ENCODE measurements at regions of chr1 and their contacts with region 1.

Region 1: DNA sequence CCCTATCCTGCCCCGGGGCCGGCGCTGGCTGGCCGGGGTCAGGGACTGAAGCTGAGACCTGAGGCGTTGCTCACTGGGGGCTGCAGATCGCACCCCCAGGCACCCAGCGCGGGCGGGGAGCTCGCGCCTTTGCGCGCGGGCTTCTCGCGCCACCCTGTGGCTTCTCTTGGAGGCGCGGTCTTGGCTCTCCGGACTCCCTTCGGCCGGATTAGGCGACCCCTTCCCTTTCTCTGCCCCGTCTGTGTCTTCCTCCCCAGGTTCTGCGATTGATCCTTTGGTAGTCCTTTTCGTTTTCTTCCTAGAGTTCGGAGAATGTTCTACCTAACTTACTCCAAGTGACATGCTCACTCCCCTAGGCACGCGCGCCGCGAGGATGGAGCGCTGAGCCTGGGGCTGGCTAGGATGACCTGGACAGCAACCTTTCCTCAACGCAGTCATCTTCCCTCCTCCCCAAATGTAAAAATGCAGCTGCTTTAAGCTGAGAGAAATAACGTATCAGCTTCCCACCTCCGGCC is 495 bp upstream of the NTRK1 start:
- DNase-seq: peak; percentile 53
- H3K4me3 Mint-ChIP-seq: peak overlapping the region; percentile 88
- H3K27ac Mint-ChIP-seq: peak overlapping the region; percentile 80
- H3K4me1 Mint-ChIP-seq: peaks cover 56% of the 10 kb centered on the region
- H3K27me3 Mint-ChIP-seq: peaks cover 15% of the 10 kb centered on the region

Region 2: DNA sequence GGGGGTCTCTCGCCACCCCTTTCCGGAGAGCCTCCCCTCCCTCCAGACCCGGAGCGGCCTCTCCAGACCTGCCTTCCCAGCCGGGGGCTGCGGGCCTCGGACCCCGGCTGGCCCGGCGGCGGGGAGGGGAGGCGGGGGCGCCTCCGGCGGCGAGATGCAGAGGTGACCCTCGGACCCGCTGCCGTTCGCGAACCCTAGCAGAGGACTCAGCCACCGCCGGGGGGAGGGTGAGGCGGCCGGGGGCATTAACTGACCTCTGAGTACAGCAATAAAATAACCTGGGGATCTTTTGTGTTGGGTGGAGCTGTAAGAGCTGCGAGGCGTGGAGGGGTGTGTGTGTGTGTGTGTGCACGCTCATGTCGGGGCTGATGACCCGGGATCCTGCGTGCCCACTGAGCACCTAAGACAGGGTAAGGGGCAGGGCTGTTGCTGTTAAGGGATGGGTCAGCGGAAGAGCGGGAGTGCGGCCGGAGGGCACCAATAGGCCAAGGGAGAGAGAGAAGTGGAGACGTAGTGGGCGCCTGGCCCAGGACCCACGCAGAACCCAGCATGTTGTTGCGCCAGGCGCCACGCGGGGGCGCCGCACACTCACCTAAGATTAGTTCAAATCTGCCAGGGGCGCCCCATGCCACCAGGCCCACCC is 234.6 kb before region 1 on chr1:
- intact Hi-C with region 1: no loop called
- DNase-seq: peak; percentile 38
- H3K4me3 Mint-ChIP-seq: peak overlapping the region; percentile 75
- H3K27ac Mint-ChIP-seq: peak overlapping the region; percentile 33
- H3K4me1 Mint-ChIP-seq: peaks cover 8% of the 10 kb centered on the region
- H3K27me3 Mint-ChIP-seq: peaks cover 74% of the 10 kb centered on the region

Region 3: GRCh38 chr1:156797212-156797871 is 62.8 kb before region 1 on chr1:
- intact Hi-C with region 1: loop called (anchors 1 kb)
- DNase-seq: peak; percentile 43
- H3K4me3 Mint-ChIP-seq: no peak overlapping the region
- H3K27ac Mint-ChIP-seq: no peak overlapping the region
- H3K4me1 Mint-ChIP-seq: peaks cover 27% of the 10 kb centered on the region
- H3K27me3 Mint-ChIP-seq: no peaks in the 10 kb centered on the region

Region 4: GRCh38 chr1:156838981-156839410 is 21.2 kb before region 1 on chr1:
- intact Hi-C with region 1: loop called (anchors 1 kb)
- DNase-seq: no peak
- H3K4me3 Mint-ChIP-seq: peak overlapping the region; percentile 24
- H3K27ac Mint-ChIP-seq: peak overlapping the region; percentile 54
- H3K4me1 Mint-ChIP-seq: peaks cover 58% of the 10 kb centered on the region
- H3K27me3 Mint-ChIP-seq: peaks cover 15% of the 10 kb centered on the region

Region 5: GRCh38 chr1:156848461-156849150 is 11.6 kb before region 1 on chr1:
- intact Hi-C with region 1: loop called (anchors 1 kb)
- DNase-seq: peak; percentile 67
- H3K4me3 Mint-ChIP-seq: peak overlapping the region; percentile 27
- H3K27ac Mint-ChIP-seq: peak overlapping the region; percentile 65
- H3K4me1 Mint-ChIP-seq: peaks cover 34% of the 10 kb centered on the region
- H3K27me3 Mint-ChIP-seq: peaks cover 40% of the 10 kb centered on the region

Region 6: DNA sequence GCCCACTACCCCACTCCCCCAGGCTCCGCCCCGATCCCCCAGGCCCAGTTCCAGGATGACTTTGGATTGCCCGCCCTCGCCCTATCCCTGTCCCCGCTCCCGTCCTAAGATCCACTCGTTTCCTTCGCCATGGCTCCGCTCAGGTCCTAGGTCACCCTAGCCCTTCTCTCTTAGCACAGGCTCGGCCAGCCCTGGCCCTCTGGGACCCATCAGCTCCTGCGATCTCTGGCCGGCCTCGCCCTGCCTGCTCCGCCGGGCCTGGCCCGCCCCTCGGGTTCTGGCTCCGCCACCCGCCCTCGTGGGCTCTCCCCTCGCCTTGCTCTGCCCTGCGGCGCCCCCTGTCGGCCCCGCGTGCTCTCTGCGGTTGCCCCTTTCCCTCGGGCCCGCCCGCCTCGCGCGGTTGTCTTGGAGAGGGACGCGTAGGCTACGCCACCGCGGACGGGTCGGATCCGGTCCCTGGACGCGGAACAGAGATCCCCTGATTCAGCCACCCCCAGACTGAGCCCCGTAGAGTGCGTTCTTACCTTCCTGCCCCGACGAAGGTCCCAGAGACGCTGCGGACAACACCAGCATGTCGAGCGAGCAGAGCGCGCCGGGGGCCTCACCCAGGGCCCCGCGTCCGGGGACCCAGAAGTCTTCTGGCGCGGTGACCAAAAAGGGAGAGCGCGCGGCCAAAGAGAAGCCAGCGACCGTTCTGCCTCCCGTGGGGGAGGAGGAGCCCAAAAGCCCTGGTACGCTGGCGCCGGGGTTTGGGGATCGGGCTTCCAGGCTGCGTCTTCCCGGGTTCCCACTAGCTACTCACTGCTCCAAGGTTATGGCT is 60.3 kb after region 1 on chr1 and contains the start of gene LRRC71:
- intact Hi-C with region 1: loop called (anchors 2 kb)
- DNase-seq: peak; percentile 64
- H3K4me3 Mint-ChIP-seq: no peak within 1 kb of the TSS
- H3K27ac Mint-ChIP-seq: no peak within 1 kb of the TSS
- H3K4me1 Mint-ChIP-seq: peaks cover 4% of the 10 kb centered on the region
- H3K27me3 Mint-ChIP-seq: peaks cover 66% of the 10 kb centered on the region
- total RNA-seq, gene LRRC71: not detected in 2 replicates

Measured in activated T-helper 1 cell treated with anti-CD3 and anti-CD28 coated beads, Interleukin-12 subunit alpha, Interleukin-12 subunit beta, Interleukin-2, Interleukin-4 antibody, amounts not matched to agents 30 ng/mL and 10 ng/mL and 1 ng/mL, durations not matched to agents 14 hours and 24 hours and 36 hours (primary cell).